ENCODE measurements at regions of chr6 and their contacts with region 1.

Region 1: GRCh38 chr6:69873291-69873690 is 6.9 kb downstream of the COL19A1 start:
- DNase-seq: no peak

Region 2: GRCh38 chr6:69852706-69853105 is 20.6 kb before region 1 on chr6:
- intact Hi-C with region 1: loop called in 1 of 2 experiments (anchors 1 kb)
- DNase-seq: no peak

Region 3: DNA sequence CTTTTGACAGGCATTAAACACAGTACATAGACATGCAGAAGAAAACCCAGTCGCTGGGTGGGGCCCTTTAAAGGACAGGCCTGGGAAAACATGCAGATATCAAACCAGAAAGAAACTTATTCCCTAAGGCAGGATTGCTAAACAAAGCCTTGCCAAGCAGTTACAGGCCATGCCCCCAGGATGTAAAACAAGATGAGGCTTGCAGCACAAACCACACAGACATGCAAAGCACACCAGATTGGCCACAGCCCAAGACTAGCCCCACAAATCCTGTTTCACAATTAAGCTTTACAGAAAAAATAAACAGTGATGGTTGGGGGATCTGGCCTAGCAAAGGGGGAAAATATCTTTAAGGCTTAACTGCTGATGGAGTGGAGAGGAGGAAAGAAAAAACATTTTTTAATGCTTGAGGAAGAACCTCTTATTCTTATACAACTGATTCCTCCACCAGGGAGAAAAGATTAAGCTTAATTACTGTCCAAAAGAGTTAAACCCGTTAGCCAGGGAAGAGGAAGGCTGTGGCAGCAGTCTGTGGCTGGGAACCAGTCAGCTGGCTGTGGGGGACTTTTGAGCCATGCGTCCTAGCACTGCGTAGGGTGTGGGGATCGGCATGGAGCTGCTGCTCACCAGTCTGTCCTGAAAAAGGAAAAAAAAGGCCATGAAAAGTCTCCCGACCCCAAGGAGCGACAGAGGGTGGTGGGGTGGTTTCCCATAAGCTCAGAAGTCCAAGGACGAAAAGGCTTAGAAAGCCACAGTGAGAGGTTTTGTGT is 21.5 kb after region 1 on chr6:
- intact Hi-C with region 1: no loop called
- DNase-seq: no peak

Region 4: DNA sequence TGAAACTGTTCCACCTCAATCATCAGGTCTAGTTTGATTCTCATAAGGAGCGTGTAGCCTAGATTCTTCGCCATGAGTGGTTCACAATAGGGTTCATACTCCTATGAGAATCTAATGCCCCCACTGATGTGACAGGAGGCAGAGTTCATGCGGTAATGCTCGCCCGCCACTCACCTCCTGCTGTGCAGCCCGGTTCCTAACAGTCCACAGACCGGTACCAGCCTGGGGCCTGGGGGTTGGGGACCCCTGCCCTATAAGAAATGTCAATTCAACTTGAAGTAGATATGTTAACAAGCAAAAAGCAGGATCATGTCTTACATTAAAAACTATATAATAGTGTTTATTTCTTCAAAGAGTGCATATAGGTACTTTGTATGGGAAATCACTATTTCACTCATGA is 209.5 kb after region 1 on chr6:
- intact Hi-C with region 1: no loop called
- DNase-seq: no peak